Breast epithelium (tissue), 4 donors: ENCODE measurements at regions of chr6 and their contacts with region 1.

Region 1: DNA sequence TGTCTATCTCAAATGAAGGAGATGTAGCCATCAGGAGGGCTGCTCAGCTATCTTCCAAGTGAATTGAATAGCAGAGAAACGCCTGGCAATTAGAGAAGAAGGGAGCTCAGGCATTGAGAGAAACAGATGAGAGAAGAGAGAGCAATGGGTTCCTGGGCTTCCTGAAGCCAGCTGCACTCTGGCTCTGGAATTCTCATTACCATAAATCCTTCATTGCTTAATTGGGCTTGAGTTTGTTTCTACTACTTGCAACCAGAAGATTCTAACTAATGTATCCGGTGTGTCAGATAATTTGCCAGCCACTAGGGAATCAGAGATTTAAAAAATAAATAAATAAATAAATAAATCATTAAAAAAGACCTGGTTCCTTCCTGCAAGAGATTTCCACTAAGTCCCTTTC is 25.0 kb upstream of the CDKAL1 start:
- DNase-seq: no peak
- H3K4me3 ChIP-seq: no peak overlapping the region
- H3K27ac ChIP-seq: no peak overlapping the region
- H3K4me1 ChIP-seq: no peaks in the 10 kb centered on the region
- H3K27me3 ChIP-seq: no peaks in the 10 kb centered on the region
- CTCF ChIP-seq: no peak
- POLR2A ChIP-seq: no peak

Region 2: DNA sequence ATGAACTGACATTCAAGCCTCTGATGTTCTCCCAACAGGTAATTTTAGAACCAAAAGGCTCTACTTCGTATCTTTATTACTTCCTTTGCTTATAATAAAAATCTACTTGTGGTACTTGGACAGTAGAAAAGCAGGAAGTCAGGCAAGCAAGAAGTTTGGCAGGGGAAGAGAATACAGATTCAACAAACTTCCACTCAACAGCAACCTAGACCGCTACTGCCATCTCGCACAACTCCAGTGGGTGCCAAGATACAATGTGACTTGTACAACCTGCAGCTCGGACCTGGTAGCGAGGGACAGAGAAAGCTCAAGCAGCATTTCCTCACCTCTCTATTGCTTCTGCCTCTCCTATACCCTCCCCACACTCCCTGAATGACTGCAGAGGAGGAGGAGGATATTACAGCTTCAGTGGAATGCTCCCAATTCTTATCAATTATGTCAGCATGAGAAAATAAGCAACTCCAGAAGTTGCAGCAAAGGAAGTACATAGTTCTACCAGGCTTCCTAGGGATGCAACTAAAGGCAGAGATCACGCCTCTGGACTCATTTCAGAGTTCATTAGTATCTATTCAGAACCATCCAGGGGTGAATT is 373.4 kb before region 1 on chr6:
- intact Hi-C with region 1: no loop called
- DNase-seq: no peak
- H3K4me3 ChIP-seq: no peak overlapping the region
- H3K27ac ChIP-seq: no peak overlapping the region
- H3K4me1 ChIP-seq: no peaks in the 10 kb centered on the region
- H3K27me3 ChIP-seq: no peaks in the 10 kb centered on the region
- CTCF ChIP-seq: no peak
- POLR2A ChIP-seq: no peak

Region 3: GRCh38 chr6:20919677-20920385 is 410.6 kb after region 1 on chr6:
- intact Hi-C with region 1: no loop called
- DNase-seq: no peak
- H3K4me3 ChIP-seq: no peak overlapping the region
- H3K27ac ChIP-seq: no peak overlapping the region
- H3K4me1 ChIP-seq: no peaks in the 10 kb centered on the region
- H3K27me3 ChIP-seq: no peaks in the 10 kb centered on the region
- CTCF ChIP-seq: no peak
- POLR2A ChIP-seq: no peak

Region 4: DNA sequence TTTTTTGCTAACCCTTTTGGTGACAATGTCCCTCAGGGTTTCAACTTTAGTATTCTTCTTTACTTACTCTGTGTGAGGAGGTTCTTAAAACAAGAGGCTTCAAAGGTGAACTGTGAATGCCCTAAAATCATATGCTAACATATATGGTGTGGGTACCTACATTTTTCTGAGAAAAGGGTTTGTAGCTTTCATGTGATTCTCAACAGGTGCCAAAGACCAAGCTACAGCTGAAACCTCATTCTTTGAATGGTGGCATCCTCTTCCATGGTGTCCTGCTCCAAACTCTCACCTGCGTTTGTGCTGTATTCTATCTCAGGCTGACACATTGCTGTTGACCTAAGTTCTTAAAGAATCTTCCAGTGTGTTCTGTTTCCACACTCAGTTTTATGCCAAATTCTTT is 1610.3 kb after region 1 on chr6:
- intact Hi-C with region 1: loop called (anchors 5 kb)
- DNase-seq: no peak
- H3K4me3 ChIP-seq: no peak overlapping the region
- H3K27ac ChIP-seq: no peak overlapping the region
- H3K4me1 ChIP-seq: no peaks in the 10 kb centered on the region
- H3K27me3 ChIP-seq: no peaks in the 10 kb centered on the region
- CTCF ChIP-seq: no peak
- POLR2A ChIP-seq: no peak